Activated CD4-positive, alpha-beta T cell treated with anti-CD3 and anti-CD28 coated beads for 36 hours (primary cell): ENCODE measurements at regions of chr1 and their contacts with region 1.

Region 1: DNA sequence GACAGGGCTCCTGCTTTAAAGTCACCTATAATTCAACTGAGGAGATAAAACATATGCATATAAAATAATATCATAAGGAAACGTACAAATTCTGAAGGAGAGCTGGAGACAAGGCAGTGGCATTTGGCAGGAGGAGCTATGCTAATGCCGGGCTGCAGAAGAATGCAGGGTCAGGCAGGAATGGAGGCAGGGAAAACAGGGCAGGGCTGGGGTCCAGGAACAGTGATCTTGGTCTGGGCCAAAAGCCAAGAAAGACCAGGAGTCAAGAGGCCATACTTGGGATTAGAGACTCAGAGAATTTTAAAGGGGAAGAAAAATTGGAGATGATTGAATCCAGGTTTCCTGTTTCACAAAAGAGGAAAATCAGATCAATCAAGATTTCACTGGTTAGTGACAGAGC is 20.0 kb upstream of the BRDT start:
- DNase-seq: no peak
- ATAC-seq: no peak
- H3K4me3 Mint-ChIP-seq: no peak overlapping the region
- H3K27ac Mint-ChIP-seq: no peak overlapping the region
- H3K4me1 Mint-ChIP-seq: peaks cover 3% of the 10 kb centered on the region
- H3K27me3 Mint-ChIP-seq: no peaks in the 10 kb centered on the region

Region 2: GRCh38 chr1:91404151-91405012 is 524.9 kb before region 1 on chr1 and contains the start of gene HFM1:
- CTCF ChIA-PET with region 1: no interaction called
- POLR2A ChIA-PET with region 1: no interaction called
- intact Hi-C with region 1: loop called in 1 of 2 experiments (anchors 5 kb)
- DNase-seq: peak; percentile 67
- ATAC-seq: peak; percentile 96
- H3K4me3 Mint-ChIP-seq: peak within 1 kb of the TSS; percentile 67
- H3K27ac Mint-ChIP-seq: peak within 1 kb of the TSS; percentile 60
- H3K4me1 Mint-ChIP-seq: peaks cover 7% of the 10 kb centered on the region
- H3K27me3 Mint-ChIP-seq: peaks cover 44% of the 10 kb centered on the region
- total RNA-seq, gene HFM1: not detected

Region 3: DNA sequence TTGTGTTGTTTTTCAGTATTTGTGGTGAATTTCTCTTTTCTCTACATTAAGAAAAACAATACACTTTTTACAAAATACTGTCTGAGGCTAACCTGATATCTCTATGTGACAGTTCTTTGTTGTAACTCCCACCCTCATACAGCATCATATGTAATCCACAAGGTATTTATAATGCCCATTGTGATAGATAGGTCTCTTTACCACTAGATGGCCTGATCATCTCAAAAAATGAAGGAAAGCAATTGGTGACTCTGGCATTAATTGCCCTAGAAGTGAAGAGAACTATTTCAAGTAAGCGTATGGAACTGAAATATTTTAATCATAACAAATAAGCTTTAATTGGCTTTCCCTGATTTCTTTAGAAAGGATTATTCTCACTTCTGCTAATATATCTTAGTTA is 488.4 kb before region 1 on chr1:
- CTCF ChIA-PET with region 1: no interaction called
- POLR2A ChIA-PET with region 1: no interaction called
- intact Hi-C with region 1: loop called (anchors 5 kb)
- DNase-seq: no peak
- ATAC-seq: no peak
- H3K4me3 Mint-ChIP-seq: no peak overlapping the region
- H3K27ac Mint-ChIP-seq: no peak overlapping the region
- H3K4me1 Mint-ChIP-seq: peaks cover 10% of the 10 kb centered on the region
- H3K27me3 Mint-ChIP-seq: peaks cover 31% of the 10 kb centered on the region

Region 4: DNA sequence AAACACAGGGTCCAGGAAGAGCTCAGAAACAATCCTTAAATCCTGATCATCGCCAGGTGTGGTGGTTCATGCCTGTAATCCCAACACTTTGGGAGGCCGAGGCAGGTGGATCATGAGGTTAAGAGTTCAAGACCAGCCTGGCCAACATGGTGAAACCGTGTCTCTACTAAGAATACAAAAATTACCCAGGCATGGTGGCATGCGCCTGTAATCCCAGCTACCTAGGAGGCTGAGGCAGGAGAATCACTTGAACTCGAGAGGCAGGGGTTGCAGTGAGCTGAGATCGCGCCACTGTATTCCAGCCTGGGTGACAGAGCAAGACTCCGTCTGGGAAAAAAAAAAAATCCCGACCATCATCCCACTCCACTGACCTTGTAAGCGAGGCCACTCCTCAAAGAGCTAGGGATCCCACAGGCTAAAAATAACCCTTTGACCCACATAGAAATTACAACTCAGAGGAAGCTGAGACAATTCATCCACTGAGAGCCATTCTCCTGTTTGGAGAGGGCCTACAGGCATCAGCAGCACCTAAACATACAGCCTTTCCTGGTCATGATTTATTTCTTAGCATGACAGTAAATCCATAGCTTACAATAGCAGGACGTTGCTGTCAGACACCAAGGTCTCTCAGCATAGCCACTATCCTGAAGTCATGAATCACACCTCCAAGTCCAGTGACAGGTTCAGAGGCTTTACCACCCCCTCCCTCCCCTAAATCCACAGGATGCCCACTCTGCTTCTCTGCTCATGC is 110.0 kb before region 1 on chr1:
- CTCF ChIA-PET with region 1: no interaction called
- POLR2A ChIA-PET with region 1: no interaction called
- intact Hi-C with region 1: no loop called
- DNase-seq: no peak
- ATAC-seq: peak; percentile 26
- H3K4me3 Mint-ChIP-seq: no peak overlapping the region
- H3K27ac Mint-ChIP-seq: no peak overlapping the region
- H3K4me1 Mint-ChIP-seq: peaks cover 19% of the 10 kb centered on the region
- H3K27me3 Mint-ChIP-seq: no peaks in the 10 kb centered on the region